Activated B cell treated with CpG ODN at 0.5 μM for 24 hours (primary cell): ENCODE measurements at regions of chr3 and their contacts with region 1.

Region 1: DNA sequence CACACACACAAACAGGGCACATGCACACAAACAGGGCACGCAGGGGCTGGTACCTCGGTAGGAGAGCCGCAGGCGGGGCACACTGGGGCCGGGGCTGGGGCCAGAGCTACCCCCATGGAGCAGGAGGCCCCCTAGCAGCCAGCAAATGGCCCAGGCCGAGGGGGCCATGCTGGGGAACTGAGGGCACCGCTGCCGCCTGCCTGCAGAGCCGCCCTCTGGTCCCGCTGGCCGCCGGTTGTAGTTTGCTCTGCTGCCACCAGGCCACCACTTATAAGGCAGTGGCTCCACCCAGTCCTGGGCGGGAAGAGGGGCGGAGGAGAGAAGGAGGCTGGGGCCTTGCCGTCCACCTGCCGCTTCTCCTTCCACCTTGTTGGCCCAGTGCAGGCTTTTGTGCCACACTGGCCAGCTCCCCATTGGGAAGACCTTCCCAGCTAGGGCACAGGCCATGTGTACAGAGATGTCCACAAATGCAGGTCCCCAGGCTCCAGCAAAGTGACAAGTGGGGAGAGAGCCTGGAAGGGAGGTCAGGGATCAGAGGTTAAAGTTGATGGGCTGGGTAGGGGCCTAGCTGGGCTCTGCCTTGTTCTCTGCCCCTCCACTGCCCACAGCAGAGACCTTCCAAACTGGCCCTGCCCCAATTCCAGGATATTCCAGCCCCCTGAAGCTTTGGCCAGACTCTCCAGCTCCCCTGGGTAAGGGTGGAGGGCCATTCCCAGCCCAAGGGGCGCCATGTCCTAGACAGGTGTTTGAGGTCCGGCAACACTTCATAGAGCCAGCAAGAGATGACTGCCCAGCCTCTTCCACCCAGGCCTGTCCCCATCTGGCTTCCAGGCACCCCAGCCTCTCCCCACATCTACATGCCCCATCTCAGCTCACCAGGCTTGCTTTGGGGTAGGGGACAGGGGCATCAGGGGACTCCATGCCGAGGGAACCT is at the start of gene SEMA3G:
- DNase-seq: peak; percentile 62
- ATAC-seq: peak; percentile 97
- H3K4me3 Mint-ChIP-seq: no peak within 1 kb of the TSS
- H3K27ac Mint-ChIP-seq: no peak within 1 kb of the TSS
- H3K4me1 Mint-ChIP-seq: peaks cover 9% of the 10 kb centered on the region
- H3K27me3 Mint-ChIP-seq: peaks cover 3% of the 10 kb centered on the region
- CTCF ChIP-seq: no peak
- total RNA-seq, gene SEMA3G: not detected in 2 replicates

Region 2: DNA sequence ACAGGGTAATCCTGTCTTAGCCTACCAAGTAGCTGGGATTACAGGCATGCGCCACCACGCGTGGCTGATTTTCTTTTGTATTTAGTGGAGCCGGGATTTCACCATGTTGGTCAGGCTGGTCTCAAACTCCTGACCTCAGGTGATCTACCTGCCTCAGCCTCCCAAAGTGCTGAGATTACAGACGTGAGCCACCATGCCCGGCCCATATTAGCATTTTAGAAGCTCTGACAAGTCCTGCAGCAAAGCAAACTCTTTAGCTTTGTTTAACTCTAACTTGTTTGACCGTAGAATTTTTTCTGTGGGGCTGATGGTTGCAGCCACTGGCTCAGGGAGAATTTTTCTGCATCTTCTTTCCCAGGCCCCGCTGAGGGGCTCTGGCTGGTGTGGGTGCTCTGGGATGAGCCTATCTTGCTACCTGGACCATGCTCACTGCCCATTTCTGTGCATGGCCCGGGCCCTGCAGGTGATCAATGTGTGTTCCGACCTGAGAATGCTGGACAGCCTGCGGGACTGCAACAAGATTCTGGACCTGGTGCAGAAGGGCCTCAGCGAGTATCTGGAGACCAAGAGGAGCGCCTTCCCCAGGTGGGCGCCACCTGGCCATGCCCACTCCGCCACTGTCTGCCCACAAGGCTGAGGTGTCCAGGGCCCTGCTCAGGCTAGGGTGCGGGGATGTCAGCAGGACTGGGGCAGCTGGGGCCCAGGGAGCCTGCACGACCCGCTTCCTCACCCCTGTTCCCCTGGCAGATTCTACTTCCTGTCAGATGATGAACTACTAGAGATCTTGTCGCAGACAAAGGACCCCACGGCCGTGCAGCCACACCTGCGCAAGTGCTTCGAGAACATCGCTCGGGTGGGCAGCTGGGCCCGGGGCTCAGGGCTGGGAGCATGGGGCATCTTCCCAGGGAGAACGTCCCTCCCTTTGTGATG is 87.7 kb before region 1 on chr3:
- CTCF ChIA-PET with region 1: no interaction called
- POLR2A ChIA-PET with region 1: no interaction called
- intact Hi-C with region 1: no loop called
- DNase-seq: no peak
- ATAC-seq: no peak
- H3K4me3 Mint-ChIP-seq: no peak overlapping the region
- H3K27ac Mint-ChIP-seq: no peak overlapping the region
- H3K4me1 Mint-ChIP-seq: no peaks in the 10 kb centered on the region
- H3K27me3 Mint-ChIP-seq: no peaks in the 10 kb centered on the region
- CTCF ChIP-seq: no peak

Region 3: DNA sequence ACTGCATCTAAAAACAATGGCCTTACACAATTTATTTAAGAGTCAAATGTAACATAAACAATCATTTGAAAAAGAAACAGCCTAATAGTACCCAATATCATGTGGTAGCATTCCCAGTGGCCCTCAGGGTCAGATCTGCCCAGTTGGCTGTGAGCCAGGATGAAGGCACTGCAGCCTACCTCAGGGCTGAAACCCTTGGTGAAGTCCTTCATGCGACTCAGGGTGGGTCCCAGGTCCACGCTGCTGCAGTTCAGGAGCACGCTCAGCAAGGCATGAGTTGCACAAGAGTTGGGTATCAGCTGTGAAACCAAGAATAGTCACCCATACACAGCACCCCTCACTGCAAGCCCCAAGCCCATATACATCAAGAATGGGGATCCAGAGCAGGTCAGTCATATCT is 37.3 kb before region 1 on chr3:
- CTCF ChIA-PET with region 1: interaction called, 28 read pairs
- POLR2A ChIA-PET with region 1: interaction called, 3 read pairs
- intact Hi-C with region 1: loop called (anchors 1 kb)
- DNase-seq: no peak
- ATAC-seq: no peak
- H3K4me3 Mint-ChIP-seq: no peak overlapping the region
- H3K27ac Mint-ChIP-seq: no peak overlapping the region
- H3K4me1 Mint-ChIP-seq: peaks cover 35% of the 10 kb centered on the region
- H3K27me3 Mint-ChIP-seq: no peaks in the 10 kb centered on the region
- CTCF ChIP-seq: no peak

Region 4: DNA sequence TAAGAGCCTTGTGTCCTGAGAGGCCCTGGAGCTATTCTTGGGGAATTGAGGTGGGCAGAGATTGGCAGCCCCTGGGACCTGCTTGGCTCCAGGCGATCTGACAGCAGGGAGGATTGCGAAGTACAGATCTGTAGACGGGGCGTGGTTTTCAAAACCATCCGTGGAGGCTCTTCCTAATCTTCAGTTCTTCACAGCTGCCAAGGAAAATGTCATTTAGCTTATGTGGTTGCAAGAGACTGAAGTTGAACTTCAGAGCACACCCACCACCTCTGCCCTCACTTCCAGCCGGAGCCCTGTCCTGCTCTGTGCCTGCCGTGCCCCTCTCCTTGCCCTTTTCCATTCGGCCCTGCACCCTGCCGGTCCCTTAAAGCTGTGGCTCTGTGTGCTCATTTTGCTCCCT is 23.2 kb after region 1 on chr3:
- CTCF ChIA-PET with region 1: no interaction called
- POLR2A ChIA-PET with region 1: no interaction called
- intact Hi-C with region 1: no loop called
- DNase-seq: no peak
- ATAC-seq: no peak
- H3K4me3 Mint-ChIP-seq: no peak overlapping the region
- H3K27ac Mint-ChIP-seq: no peak overlapping the region
- H3K4me1 Mint-ChIP-seq: peaks cover 2% of the 10 kb centered on the region
- H3K27me3 Mint-ChIP-seq: no peaks in the 10 kb centered on the region
- CTCF ChIP-seq: no peak